Heart right ventricle (tissue), 16 donors: ENCODE measurements at regions of chr19 and their contacts with region 1.

Region 1: GRCh38 chr19:6110360-6110977 is at the start of gene RFX2:
- DNase-seq: peak; percentile 99
- ATAC-seq: peak; percentile 97 to 99 (median 99)
- H3K4me3 ChIP-seq: peak within 1 kb of the TSS; percentile 57 to 80 (median 66)
- H3K27ac ChIP-seq: peak within 1 kb of the TSS; percentile 41 to 90 (median 86)
- H3K4me1 ChIP-seq: peaks cover 5 to 26% (median 15%) of the 10 kb centered on the region in 9 donors
- H3K27me3 ChIP-seq: no peaks in the 10 kb centered on the region
- CTCF ChIP-seq: no peak
- total RNA-seq, gene RFX2: 4.2 to 11.5 (median 5.0) TPM

Region 2: DNA sequence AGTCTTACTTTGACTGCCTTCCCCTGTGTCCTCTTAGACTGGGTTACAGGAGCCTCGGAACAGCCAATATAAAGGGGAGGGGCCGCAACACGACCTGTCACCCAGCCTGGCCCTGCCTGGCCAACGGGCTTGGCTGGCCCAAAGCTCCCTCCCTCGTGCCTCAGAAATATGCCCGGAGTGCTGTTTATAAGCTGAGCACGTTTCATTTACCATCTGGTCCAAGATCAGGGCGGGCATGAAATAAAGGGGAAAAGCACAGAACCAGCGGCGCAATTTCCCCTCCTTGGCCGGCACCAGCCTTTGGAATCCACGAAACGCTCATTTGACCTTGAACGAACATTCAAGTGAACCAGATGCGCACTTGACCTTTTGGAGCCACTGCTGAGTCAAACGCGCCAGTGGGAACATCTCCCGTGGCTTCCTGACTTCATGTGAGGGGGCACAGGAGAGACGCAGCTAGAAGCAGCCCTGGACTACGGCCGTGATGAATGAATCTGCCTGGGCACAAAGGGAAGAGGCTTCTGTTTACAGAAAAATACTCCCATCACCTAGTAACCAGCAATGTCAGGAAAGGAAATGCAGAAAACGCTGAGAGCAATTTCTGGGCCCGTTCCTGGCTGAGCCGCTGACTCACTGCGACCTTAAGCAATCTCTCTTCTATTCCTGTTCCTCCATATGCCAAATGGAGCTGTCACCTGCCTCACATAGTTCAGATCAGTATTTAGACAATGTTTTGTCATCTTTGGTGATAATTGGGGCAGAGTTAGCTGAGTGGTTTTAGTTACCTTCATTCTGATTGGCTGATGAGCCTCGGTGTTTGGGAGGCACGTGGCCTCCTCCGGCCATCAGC is 53.4 kb before region 1 on chr19:
- intact Hi-C with region 1: loop called in 6 of 10 experiments (anchors 2 to 5 kb)
- DNase-seq: peak; percentile 60 to 84
- ATAC-seq: peak; percentile 72 to 92 (median 88)
- H3K4me3 ChIP-seq: peak overlapping the region in 6 of 10 donors; percentile 18 to 31 (median 22)
- H3K27ac ChIP-seq: peak overlapping the region; percentile 86 to 95 (median 91)
- H3K4me1 ChIP-seq: peaks cover 26 to 67% (median 46%) of the 10 kb centered on the region in 9 donors
- H3K27me3 ChIP-seq: no peaks in the 10 kb centered on the region
- CTCF ChIP-seq: peak in 1 of 9 donors; percentile 38

Region 3: GRCh38 chr19:6066661-6067646 is 43.5 kb before region 1 on chr19:
- intact Hi-C with region 1: loop called in 4 of 10 experiments (anchors 1 to 5 kb)
- DNase-seq: peak; percentile 91 to 97
- ATAC-seq: peak; percentile 79 to 94 (median 90)
- H3K4me3 ChIP-seq: peak overlapping the region in 4 of 10 donors; percentile 1 to 24 (median 14)
- H3K27ac ChIP-seq: peak overlapping the region; percentile 46 to 93 (median 88)
- H3K4me1 ChIP-seq: peaks cover 17 to 77% (median 64%) of the 10 kb centered on the region in 9 donors
- H3K27me3 ChIP-seq: no peaks in the 10 kb centered on the region
- CTCF ChIP-seq: no peak

Region 4: DNA sequence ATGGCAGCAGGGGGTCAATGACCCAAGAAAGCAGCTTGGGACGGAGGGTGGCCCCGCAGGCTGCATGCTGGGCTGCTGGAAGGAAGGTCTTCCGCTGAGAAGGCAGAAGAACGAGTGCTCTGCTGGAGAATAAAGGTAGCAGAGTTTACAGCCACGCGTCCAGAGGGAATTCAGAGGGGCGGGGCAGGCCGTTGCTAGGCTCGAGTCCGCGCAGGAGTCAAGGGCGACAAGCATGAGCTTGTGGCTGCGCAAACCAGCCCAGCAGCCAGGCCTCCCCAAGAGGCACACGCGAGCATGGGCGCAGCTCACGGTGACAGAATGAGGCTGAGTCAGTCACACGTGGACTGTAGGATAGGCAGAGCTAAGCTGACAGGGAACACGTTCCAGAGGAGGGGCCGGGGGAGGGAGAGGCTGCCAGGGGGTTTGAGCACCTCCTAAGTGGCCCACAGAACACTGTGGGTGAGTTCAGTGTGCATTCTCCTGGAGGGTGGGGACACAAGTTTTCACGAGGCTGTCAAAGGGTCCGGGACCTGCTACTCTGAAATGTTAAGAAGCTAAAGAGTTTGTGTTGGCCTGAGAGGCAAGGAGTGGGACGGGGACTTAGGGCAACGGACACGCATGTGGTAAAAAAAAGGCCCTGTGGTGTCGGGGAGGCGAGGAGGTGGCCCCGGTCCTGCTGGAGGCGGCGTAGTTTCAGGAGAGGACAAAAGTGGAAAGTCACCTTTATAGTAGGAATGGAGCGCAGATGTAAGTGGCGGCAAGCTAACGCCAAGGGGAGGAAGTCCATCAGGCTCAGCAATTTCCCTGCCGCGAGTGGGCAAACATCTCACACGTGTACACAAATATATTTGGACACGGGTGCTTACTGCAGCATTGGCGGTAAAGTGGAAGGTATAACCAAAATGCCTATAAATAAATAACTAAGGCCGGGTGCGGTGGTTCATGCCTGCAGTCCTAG is 17.9 kb before region 1 on chr19:
- intact Hi-C with region 1: loop called in 1 of 10 experiments (anchors 1 kb)
- DNase-seq: peak; percentile 78 to 82
- ATAC-seq: peak; percentile 83 to 95 (median 90)
- H3K4me3 ChIP-seq: peak overlapping the region in 8 of 10 donors; percentile 20 to 44 (median 29)
- H3K27ac ChIP-seq: peak overlapping the region; percentile 27 to 90 (median 76)
- H3K4me1 ChIP-seq: peaks cover 13 to 48% (median 28%) of the 10 kb centered on the region in 9 donors
- H3K27me3 ChIP-seq: no peaks in the 10 kb centered on the region
- CTCF ChIP-seq: peak in 2 of 9 donors; percentile 18 to 21

Region 5: GRCh38 chr19:6127716-6128335 is 17.4 kb after region 1 on chr19:
- intact Hi-C with region 1: no loop called
- DNase-seq: no peak
- ATAC-seq: no peak
- H3K4me3 ChIP-seq: no peak overlapping the region
- H3K27ac ChIP-seq: no peak overlapping the region
- H3K4me1 ChIP-seq: no peaks in the 10 kb centered on the region
- H3K27me3 ChIP-seq: no peaks in the 10 kb centered on the region
- CTCF ChIP-seq: no peak